Heart right ventricle (tissue), 16 donors: ENCODE measurements at regions of chr12 and their contacts with region 1.

Region 1: GRCh38 chr12:31959161-31959700 is at the start of gene RESF1:
- DNase-seq: peak; percentile 89
- ATAC-seq: peak; percentile 98 to 99 (median 98)
- H3K4me3 ChIP-seq: peak within 1 kb of the TSS; percentile 47 to 86 (median 72)
- H3K27ac ChIP-seq: peak within 1 kb of the TSS; percentile 84 to 99 (median 96)
- H3K4me1 ChIP-seq: peaks cover 3 to 46% (median 38%) of the 10 kb centered on the region in 9 donors
- H3K27me3 ChIP-seq: no peaks in the 10 kb centered on the region
- CTCF ChIP-seq: no peak
- total RNA-seq, gene RESF1: 15.0 to 36.3 (median 19.3) TPM

Region 2: GRCh38 chr12:31659087-31659933 is 299.9 kb before region 1 on chr12 and contains the start of gene ETFBKMT:
- intact Hi-C with region 1: loop called in 4 of 10 experiments (anchors 2 to 10 kb)
- DNase-seq: peak; percentile 84 to 89
- ATAC-seq: peak; percentile 93 to 97 (median 96)
- H3K4me3 ChIP-seq: peak within 1 kb of the TSS; percentile 30 to 78 (median 67)
- H3K27ac ChIP-seq: peak within 1 kb of the TSS; percentile 83 to 98 (median 94)
- H3K4me1 ChIP-seq: peaks cover 0 to 19% (median 11%) of the 10 kb centered on the region in 9 donors
- H3K27me3 ChIP-seq: no peaks in the 10 kb centered on the region
- CTCF ChIP-seq: peak in 8 of 9 donors; percentile 23 to 74 (median 50)
- total RNA-seq, gene ETFBKMT: 5.5 to 8.7 (median 6.2) TPM

Region 3: GRCh38 chr12:31728917-31729640 is 230.2 kb before region 1 on chr12 and contains the start of gene AMN1:
- intact Hi-C with region 1: loop called in 6 of 10 experiments (anchors 2 to 10 kb)
- DNase-seq: peak; percentile 99
- ATAC-seq: peak; percentile 97 to 99 (median 98)
- H3K4me3 ChIP-seq: peak within 1 kb of the TSS; percentile 46 to 69 (median 63)
- H3K27ac ChIP-seq: peak within 1 kb of the TSS; percentile 92 to 99 (median 96)
- H3K4me1 ChIP-seq: peaks cover 0 to 80% (median 41%) of the 10 kb centered on the region in 9 donors
- H3K27me3 ChIP-seq: no peaks in the 10 kb centered on the region
- CTCF ChIP-seq: peak in 5 of 9 donors; percentile 3 to 28 (median 19)
- total RNA-seq, gene AMN1: 12.7 to 24.9 (median 14.6) TPM

Region 4: DNA sequence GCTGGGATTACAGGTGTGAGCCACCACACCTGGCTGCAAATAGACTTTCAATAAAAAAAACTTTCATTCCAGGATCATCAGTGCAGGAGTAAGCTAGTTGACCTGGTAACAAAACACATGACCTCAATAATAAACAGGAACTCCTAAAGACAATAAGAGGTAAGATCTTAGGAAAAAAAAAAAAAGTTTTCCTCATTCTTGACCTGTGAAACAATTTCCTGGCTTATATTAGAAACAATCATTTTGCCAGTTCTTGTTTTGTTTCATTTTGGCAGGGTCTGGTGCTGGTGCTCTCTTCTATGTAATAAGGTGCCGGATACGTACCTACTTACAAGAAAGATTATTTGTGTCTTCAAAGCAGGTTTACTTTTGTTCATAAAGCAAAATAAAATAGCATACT is 139.8 kb before region 1 on chr12:
- intact Hi-C with region 1: loop called in 1 of 10 experiments (anchors 5 kb)
- DNase-seq: no peak
- ATAC-seq: peak in 6 of 8 donors; percentile 65 to 79 (median 72)
- H3K4me3 ChIP-seq: no peak overlapping the region
- H3K27ac ChIP-seq: peak overlapping the region in 5 of 10 donors; percentile 22 to 67 (median 30)
- H3K4me1 ChIP-seq: peaks cover 0 to 5% (median 0%) of the 10 kb centered on the region in 9 donors
- H3K27me3 ChIP-seq: no peaks in the 10 kb centered on the region
- CTCF ChIP-seq: no peak

Region 5: DNA sequence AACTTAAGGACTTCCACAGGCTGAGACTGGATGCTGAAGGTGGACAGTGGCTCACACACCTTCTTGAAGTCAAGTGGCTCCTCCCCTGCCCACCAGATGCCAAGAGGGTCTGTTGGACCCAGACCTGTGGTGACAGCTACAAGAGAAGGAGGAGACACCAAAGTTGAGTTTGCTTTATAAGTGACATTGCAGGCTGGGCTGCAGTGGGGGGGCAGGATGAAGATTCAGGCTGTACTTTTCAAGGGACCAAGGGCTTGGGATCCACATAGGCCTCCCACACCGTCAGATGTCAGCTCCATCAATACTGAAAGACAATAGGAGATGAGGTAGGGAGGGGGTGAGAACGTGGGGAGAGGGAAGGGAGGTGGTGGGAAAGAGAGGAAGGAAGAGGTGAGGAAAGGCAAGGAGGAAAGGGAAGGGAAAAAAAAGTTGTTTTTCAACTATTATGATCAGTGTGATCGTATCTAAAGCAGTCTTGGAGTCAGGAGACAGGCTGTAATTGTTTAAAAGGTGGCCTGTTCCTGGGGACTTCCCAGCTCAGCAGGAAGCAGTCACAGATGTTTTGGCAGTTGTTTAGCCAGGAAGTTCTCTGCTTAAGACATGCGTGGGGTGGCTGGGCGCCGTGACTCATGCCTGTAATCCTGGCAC is 84.1 kb before region 1 on chr12:
- intact Hi-C with region 1: loop called in 1 of 10 experiments (anchors 5 kb)
- DNase-seq: peak; percentile 41 to 69
- ATAC-seq: peak; percentile 84 to 96 (median 92)
- H3K4me3 ChIP-seq: no peak overlapping the region
- H3K27ac ChIP-seq: peak overlapping the region; percentile 32 to 88 (median 74)
- H3K4me1 ChIP-seq: peaks cover 0 to 36% (median 17%) of the 10 kb centered on the region in 9 donors
- H3K27me3 ChIP-seq: no peaks in the 10 kb centered on the region
- CTCF ChIP-seq: no peak